Colonic mucosa (tissue), 4 donors: ENCODE measurements at regions of chr16 and their contacts with region 1.

Region 1: GRCh38 chr16:10895053-10895946 is 18.3 kb downstream of the CIITA start:
- DNase-seq: peak; percentile 47
- H3K4me3 ChIP-seq: no peak overlapping the region
- H3K27ac ChIP-seq: no peak overlapping the region
- H3K4me1 ChIP-seq: no peaks in the 10 kb centered on the region
- H3K27me3 ChIP-seq: no peaks in the 10 kb centered on the region
- CTCF ChIP-seq: no peak

Region 2: DNA sequence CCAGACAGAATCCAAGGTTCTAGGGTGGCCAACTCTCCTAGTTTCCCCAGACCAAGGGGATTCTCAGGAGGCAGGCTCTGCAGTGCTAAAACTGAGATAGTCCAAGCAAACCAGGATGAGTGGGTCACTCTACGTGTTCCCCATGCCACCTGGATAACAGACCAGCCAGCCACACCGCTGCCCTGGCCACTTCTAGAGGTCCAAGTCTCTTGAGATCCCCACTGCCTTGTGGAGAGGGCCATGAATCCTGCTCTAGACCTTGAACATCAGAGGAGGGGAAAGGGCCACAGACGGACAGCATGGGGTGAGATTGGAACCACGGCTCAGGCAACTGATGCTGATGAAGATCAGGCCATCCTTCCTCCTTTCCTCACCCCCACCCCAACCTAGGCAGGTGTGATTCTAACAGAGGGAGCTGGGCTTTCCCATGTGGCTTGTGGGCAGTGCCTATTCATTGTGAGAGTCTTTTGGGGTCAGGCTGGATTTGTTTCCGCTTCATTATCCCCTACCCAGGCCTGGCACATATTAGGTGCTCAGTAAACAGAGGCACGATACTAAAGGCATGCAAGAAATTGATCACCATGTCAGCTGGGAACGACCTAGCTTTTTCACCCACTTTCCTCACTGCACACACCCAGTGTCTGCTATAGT is 59.9 kb before region 1 on chr16:
- intact Hi-C with region 1: loop called (anchors 10 kb)
- DNase-seq: no peak
- H3K4me3 ChIP-seq: no peak overlapping the region
- H3K27ac ChIP-seq: no peak overlapping the region
- H3K4me1 ChIP-seq: no peaks in the 10 kb centered on the region
- H3K27me3 ChIP-seq: no peaks in the 10 kb centered on the region
- CTCF ChIP-seq: no peak